Calu3 (cell line): ENCODE measurements at regions of chr10 and their contacts with region 1.

Region 1: DNA sequence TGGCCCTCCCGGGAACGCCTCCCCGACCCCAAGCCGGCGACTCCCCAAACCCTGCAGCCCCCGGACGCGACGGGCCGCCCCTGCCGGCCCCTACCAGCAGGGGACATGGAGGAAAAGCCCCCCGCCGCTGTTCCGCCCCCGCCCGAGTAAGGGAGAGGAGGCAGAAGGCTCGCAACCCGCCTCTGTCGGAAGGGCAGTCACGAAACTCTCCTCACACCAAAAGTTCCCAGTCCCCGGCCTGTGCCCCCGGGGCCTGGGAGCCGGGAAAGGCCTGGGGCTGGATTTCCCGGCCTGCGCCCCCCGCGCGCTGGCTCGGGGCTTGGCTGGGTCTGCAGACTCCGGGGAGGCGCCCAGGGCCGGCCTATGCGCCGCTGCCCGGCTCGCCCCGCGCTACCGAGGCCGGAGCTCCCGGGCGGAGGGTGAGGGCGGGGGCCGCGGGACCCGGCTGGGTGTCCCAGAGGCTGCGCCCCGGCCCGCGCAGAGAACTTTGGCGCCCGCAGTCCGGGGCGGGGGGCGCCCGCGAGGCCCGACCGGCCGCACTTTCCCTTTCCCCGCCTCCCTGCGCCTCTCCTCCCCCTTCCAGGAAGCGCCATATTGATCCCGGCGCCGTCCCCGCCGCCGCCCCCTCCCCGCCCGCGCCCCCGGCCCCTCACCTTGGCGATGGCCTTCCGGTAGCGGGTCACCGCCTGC is 728 bp downstream of the PARD3 start:
- DNase-seq: peak; percentile 68
- H3K4me3 Mint-ChIP-seq: peak overlapping the region; percentile 62
- H3K27ac Mint-ChIP-seq: peak overlapping the region; percentile 62
- H3K4me1 Mint-ChIP-seq: peaks cover 56% of the 10 kb centered on the region
- H3K27me3 Mint-ChIP-seq: no peaks in the 10 kb centered on the region
- CTCF ChIP-seq: peak; percentile 14

Region 2: DNA sequence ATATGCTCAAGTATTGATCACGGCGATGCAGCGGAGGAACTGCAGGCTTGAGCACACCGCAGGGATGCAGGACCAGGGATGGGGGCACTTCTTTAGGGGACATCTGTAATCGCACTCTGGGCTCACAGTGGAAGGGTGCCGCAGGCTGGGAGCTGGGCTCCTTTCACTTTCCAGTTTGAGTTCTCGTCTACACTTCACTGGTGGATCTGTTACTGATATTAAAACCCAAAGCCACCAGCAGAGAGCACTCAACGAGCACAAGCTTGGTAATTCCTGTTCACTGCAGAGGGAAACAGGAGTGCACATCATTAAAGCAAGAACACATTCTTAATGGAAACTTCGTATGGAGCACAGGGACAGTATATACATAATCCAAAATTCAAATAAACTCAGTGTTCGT is 90.6 kb before region 1 on chr10:
- CTCF ChIA-PET with region 1: interaction called, 4 read pairs
- intact Hi-C with region 1: loop called (anchors 2 kb)
- DNase-seq: peak; percentile 43
- H3K4me3 Mint-ChIP-seq: no peak overlapping the region
- H3K27ac Mint-ChIP-seq: no peak overlapping the region
- H3K4me1 Mint-ChIP-seq: peaks cover 56% of the 10 kb centered on the region
- H3K27me3 Mint-ChIP-seq: no peaks in the 10 kb centered on the region
- CTCF ChIP-seq: peak; percentile 49

Region 3: GRCh38 chr10:34758447-34758996 is 55.8 kb before region 1 on chr10:
- CTCF ChIA-PET with region 1: interaction called, 3 read pairs
- intact Hi-C with region 1: loop called (anchors 1 kb)
- DNase-seq: peak; percentile 58
- H3K4me3 Mint-ChIP-seq: peak overlapping the region; percentile 67
- H3K27ac Mint-ChIP-seq: peak overlapping the region; percentile 100
- H3K4me1 Mint-ChIP-seq: peaks cover 80% of the 10 kb centered on the region
- H3K27me3 Mint-ChIP-seq: no peaks in the 10 kb centered on the region
- CTCF ChIP-seq: no peak